Activated naive CD4-positive, alpha-beta T cell treated with anti-CD3 and anti-CD28 coated beads, Interleukin-2, amount 10 ng/mL, durations not matched to agents 7 days and 5 days (primary cell): ENCODE measurements at regions of chr6 and their contacts with region 1.

Region 1: DNA sequence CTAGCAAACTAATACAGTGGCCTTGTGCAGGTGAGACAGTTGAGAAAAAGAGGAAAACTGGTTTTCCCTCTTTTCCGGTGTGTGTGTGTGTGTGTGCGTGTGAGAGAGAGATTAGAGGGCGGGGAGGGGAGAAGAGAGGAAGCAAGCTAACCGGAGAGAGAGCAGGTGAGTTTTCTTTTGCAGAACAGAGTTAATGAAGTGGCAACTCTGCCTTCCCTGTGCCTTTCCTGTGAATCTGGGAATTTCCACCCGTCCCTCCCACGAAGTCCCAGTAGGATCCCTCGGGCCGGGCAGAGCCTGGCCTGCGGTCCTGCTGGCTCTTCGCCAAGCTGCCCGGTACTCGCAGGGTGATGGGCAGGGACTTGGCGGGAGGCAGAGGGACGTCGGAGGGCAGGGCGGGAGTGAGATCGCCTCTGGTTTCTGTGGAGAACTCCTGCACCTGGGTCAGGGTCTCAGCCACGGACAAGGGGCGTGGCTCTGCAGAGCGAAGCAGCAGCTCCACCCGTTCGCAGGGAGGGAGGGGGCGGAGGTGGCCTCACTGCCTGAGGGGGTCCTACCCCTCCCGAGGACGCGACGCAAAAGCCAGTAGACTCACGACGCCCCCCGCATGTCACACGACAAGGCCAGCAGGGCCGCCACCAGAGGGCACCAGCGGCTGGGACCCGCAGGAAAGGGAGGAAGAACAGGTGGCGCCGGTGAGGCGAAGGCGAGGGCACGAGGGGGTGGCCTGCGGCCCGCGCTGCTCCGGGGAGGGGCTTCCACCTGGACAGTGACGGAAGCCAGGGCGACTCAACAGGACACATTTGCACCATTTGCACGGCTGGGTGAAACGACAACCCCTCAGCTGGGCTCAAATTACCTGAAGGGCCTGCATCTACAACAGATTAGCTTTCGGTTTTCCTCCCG is 51.2 kb upstream of the RNF182 start:
- DNase-seq: peak; percentile 78
- H3K4me3 Mint-ChIP-seq: peak overlapping the region; percentile 78
- H3K27ac Mint-ChIP-seq: peak overlapping the region; percentile 12
- H3K4me1 Mint-ChIP-seq: peaks cover 16% of the 10 kb centered on the region
- H3K27me3 Mint-ChIP-seq: peaks cover 31% of the 10 kb centered on the region

Region 2: DNA sequence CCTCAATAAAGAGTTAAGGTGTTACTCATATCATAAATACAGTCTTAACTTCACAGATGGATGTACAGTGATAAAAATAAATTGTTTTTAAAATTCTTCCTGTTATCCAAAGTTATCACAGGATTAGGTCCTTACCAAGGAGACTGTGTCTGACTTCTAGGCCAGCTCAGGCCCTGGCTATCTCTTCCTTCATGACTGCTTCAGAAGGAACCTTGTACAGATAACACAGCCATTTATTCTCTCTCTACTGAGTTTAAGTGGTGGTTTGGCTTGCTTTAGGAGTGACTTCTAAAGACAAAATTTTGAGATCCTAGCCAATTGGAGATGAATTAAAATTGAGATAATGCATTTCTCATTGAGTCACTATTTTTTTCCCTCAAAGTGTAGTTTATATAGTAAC is 10.4 kb after region 1 on chr6:
- CTCF ChIA-PET with region 1: interaction called, 16 read pairs
- DNase-seq: no peak
- H3K4me3 Mint-ChIP-seq: no peak overlapping the region
- H3K27ac Mint-ChIP-seq: no peak overlapping the region
- H3K4me1 Mint-ChIP-seq: no peaks in the 10 kb centered on the region
- H3K27me3 Mint-ChIP-seq: peaks cover 4% of the 10 kb centered on the region